PC-3 (cell line): ENCODE measurements at regions of chrX and their contacts with region 1.

Region 1: DNA sequence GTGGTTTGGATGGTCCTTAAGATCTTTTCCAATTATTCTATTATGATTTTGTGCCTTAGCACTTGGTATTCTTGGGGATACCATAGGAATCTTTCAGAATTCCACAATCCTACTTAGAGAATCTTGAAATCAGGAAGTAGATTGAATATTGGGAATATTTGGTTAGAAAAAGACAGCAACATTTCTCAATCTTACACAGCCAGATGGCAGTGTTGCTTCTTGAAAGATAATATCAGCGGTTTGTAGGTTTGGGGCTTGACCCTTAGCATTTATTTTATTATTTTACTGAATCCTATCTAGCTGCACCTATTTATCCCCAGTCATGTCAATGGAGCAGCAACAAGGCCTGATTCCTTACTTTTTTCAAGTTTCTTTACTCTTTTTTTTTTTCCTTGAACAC is 28.6 kb downstream of the MAGEB1 start:
- DNase-seq: peak; percentile 43
- ATAC-seq: no peak
- H3K4me3 ChIP-seq: no peak overlapping the region
- H3K27ac ChIP-seq: no peak overlapping the region
- H3K4me1 ChIP-seq: no peaks in the 10 kb centered on the region
- H3K27me3 ChIP-seq: no peaks in the 10 kb centered on the region
- CTCF ChIP-seq: peak; percentile 60

Region 2: DNA sequence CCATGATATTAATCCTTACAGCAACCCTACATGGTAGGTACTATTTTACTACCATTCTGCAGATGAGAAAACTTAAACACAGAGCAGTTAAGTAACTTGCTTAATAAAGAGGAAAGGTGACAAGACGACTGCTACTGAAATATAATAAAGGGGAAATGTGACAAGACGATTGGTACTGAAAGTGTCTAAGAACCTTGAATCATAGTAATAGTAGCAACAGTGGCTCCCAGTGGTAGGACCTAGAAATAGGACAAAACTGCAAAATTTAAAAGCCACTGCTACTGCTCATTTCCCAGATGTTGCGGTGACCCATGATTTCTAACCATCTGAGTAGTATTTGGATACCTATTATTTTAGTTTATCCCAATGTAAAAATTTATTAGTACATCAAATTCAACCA is 212.6 kb after region 1 on chrX:
- CTCF ChIA-PET with region 1: no interaction called
- POLR2A ChIA-PET with region 1: no interaction called
- intact Hi-C with region 1: loop called (anchors 1 kb)
- DNase-seq: peak; percentile 43
- ATAC-seq: no peak
- H3K4me3 ChIP-seq: no peak overlapping the region
- H3K27ac ChIP-seq: no peak overlapping the region
- H3K4me1 ChIP-seq: no peaks in the 10 kb centered on the region
- H3K27me3 ChIP-seq: peaks cover 7% of the 10 kb centered on the region; the same call in 1 of the 2 replicates
- CTCF ChIP-seq: peak; percentile 50

Region 3: GRCh38 chrX:30504309-30504708 is 228.8 kb after region 1 on chrX:
- CTCF ChIA-PET with region 1: no interaction called
- POLR2A ChIA-PET with region 1: no interaction called
- intact Hi-C with region 1: loop called (anchors 1 kb)
- DNase-seq: peak; percentile 64
- ATAC-seq: no peak
- H3K4me3 ChIP-seq: no peak overlapping the region
- H3K27ac ChIP-seq: no peak overlapping the region
- H3K4me1 ChIP-seq: no peaks in the 10 kb centered on the region
- H3K27me3 ChIP-seq: peaks cover 11% of the 10 kb centered on the region
- CTCF ChIP-seq: peak; percentile 71